ENCODE measurements at regions of chr15 and their contacts with region 1.

Region 1: GRCh38 chr15:58517682-58518525 is 86.1 kb downstream of the LIPC start:
- DNase-seq: peak in 5 of 9 donors; percentile 8 to 34 (median 16)
- ATAC-seq: peak; percentile 44
- H3K4me3 ChIP-seq: no peak overlapping the region
- H3K4me3 Mint-ChIP-seq: peak overlapping the region; percentile 38 to 75 (median 52)
- H3K27ac ChIP-seq: peak overlapping the region; percentile 60
- H3K27ac Mint-ChIP-seq: peak overlapping the region; percentile 41 to 95 (median 88)
- H3K4me1 ChIP-seq: peaks cover 0 to 43% of the 10 kb centered on the region in 2 donors
- H3K4me1 Mint-ChIP-seq: peaks cover 51 to 84% (median 72%) of the 10 kb centered on the region in 7 donors
- H3K27me3 ChIP-seq: no peaks in the 10 kb centered on the region
- H3K27me3 Mint-ChIP-seq: no peaks in the 10 kb centered on the region

Region 2: GRCh38 chr15:58438956-58439355 is 78.9 kb before region 1 on chr15:
- CTCF ChIA-PET with region 1: no interaction called
- POLR2A ChIA-PET with region 1: no interaction called
- intact Hi-C with region 1: loop called in 1 of 2 experiments (anchors 1 kb)
- DNase-seq: peak in 5 of 9 donors; percentile 13 to 46 (median 28)
- ATAC-seq: peak; percentile 62
- H3K4me3 ChIP-seq: no peak overlapping the region
- H3K4me3 Mint-ChIP-seq: no peak overlapping the region
- H3K27ac ChIP-seq: no peak overlapping the region
- H3K27ac Mint-ChIP-seq: peak overlapping the region in 3 of 9 donors; percentile 25 to 70 (median 49)
- H3K4me1 ChIP-seq: no peaks in the 10 kb centered on the region
- H3K4me1 Mint-ChIP-seq: peaks cover 0 to 33% (median 9%) of the 10 kb centered on the region in 7 donors
- H3K27me3 ChIP-seq: no peaks in the 10 kb centered on the region
- H3K27me3 Mint-ChIP-seq: no peaks in the 10 kb centered on the region

Region 3: DNA sequence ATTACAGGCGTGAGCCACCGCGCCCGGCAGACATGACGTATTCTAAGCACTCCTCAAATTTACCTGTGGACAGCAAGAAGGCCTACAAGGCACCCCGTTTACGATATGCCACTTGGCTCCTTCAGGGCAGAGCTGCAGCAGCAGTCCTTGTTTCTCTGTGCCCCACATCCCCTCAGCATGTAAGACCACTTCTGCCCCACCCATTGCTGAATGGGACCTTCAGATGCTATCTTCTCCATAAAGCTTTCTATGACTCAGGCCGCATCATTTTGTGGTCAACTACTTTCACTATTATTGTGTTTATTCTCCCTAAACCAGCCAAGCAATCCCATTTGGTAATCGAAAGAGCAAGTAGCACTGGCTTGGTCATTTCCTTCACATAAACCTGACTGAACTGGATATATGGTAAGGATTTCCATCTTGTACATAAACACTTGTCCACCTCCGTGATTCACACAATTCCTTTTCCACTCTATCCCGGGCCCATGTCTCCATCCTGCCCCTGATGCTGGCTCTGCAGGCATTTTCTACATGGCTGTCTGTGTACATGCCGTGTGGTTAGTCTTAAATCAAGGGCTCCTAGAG is 60.4 kb before region 1 on chr15:
- CTCF ChIA-PET with region 1: no interaction called
- POLR2A ChIA-PET with region 1: no interaction called
- intact Hi-C with region 1: loop called in 1 of 2 experiments (anchors 5 kb)
- DNase-seq: no peak
- ATAC-seq: no peak
- H3K4me3 ChIP-seq: no peak overlapping the region
- H3K4me3 Mint-ChIP-seq: peak overlapping the region in 1 of 10 donors; percentile 47
- H3K27ac ChIP-seq: no peak overlapping the region
- H3K27ac Mint-ChIP-seq: peak overlapping the region in 2 of 9 donors; percentile 16 to 78
- H3K4me1 ChIP-seq: peaks cover 11 to 23% of the 10 kb centered on the region in 2 donors
- H3K4me1 Mint-ChIP-seq: peaks cover 19 to 75% (median 49%) of the 10 kb centered on the region in 7 donors
- H3K27me3 ChIP-seq: no peaks in the 10 kb centered on the region
- H3K27me3 Mint-ChIP-seq: no peaks in the 10 kb centered on the region

Region 4: DNA sequence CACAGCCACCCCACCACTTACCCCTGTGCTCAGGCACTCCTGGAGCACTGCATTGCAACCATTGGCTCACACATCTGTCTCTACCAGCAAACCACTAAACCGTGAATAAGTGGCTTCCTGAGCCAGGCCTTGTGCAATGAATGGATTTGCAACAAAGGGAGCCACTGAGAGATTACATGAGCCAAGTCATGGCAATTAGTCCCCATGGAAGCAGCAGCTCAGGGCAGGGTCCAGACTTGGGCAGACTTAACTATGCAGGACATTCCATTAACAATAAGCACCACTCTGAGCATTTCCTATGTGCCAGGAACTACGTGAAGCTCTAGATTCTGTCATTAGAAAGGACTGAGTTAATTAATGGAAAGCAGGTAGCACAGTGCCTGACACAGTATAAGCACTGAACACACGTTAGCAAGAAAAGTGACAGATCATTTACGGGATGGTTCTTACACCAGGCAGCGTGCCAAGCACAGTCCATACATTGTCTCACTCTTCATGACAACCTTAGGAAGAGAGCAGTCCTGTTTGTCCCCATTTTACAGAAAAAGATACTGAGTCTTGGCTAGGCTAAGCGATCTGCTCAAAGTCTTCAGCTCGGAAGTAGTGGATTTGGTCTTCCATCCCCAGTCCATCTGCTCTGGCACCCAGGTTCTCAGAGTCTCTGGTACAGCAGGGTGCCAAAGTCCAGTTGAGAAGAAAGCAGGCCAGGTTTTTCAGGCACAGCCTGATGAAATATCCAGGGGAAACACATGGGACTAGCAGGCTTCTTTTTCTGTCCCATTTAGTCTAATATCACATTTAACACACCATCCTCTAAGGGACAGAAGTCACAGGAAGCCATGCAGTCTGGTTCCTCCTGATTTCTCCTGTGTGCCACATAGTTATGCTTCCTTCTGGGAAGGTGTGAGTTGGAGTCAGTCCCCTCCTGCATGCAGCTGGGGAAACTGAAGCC is 42.1 kb before region 1 on chr15:
- CTCF ChIA-PET with region 1: no interaction called
- POLR2A ChIA-PET with region 1: no interaction called
- intact Hi-C with region 1: loop called in 1 of 2 experiments (anchors 1 kb)
- DNase-seq: no peak
- ATAC-seq: no peak
- H3K4me3 ChIP-seq: no peak overlapping the region
- H3K4me3 Mint-ChIP-seq: peak overlapping the region in 8 of 10 donors; percentile 15 to 65 (median 42)
- H3K27ac ChIP-seq: peak overlapping the region; percentile 26
- H3K27ac Mint-ChIP-seq: peak overlapping the region; percentile 23 to 89 (median 75)
- H3K4me1 ChIP-seq: peaks cover 28 to 43% of the 10 kb centered on the region in 2 donors
- H3K4me1 Mint-ChIP-seq: peaks cover 33 to 70% (median 57%) of the 10 kb centered on the region in 7 donors
- H3K27me3 ChIP-seq: no peaks in the 10 kb centered on the region
- H3K27me3 Mint-ChIP-seq: no peaks in the 10 kb centered on the region

Region 5: DNA sequence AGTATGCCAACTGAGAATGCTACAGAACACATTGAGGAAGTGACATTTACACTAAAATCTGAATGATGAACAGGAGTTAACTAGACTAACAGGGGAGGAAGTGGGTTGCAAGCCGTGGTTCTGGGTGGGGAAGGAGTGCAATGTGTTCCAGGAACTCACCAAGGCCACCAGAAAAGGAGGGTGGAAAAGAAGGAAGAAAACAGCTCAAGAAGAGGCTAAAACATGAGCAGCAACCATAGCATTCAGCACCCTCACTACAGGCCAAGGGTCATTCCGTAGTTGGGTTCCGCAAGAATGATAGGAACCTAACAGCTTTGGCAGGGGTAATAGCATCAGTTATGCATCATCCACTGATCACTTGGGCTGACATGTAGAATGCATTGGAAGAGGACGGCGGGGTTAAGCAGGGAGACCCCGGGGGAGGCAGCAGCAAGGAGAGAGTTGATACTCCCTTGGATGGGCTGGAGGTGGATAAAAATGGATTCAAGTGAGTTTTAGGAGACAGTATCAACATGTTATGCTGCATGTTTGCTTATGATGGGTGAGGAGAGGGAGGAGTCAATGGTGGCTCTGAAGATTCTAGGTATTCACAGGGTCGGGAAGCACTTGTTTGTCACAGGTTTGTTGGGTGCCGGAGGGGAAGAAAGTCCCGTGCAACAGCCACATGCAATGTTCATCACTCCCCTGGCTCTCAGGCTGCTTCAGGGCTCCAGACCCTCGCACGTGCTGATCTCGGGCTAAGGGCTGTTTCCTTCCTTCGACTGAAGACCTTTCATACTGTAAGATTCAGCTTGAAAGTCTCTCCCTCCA is 32.9 kb before region 1 on chr15:
- CTCF ChIA-PET with region 1: no interaction called
- POLR2A ChIA-PET with region 1: interaction called, 3 read pairs
- intact Hi-C with region 1: loop called (anchors 2 kb)
- DNase-seq: peak in 6 of 9 donors; percentile 56 to 73 (median 65)
- ATAC-seq: peak; percentile 85
- H3K4me3 ChIP-seq: peak overlapping the region; percentile 25
- H3K4me3 Mint-ChIP-seq: peak overlapping the region; percentile 61 to 81 (median 72)
- H3K27ac ChIP-seq: peak overlapping the region; percentile 42
- H3K27ac Mint-ChIP-seq: peak overlapping the region; percentile 80 to 95 (median 90)
- H3K4me1 ChIP-seq: peaks cover 42 to 45% of the 10 kb centered on the region in 2 donors
- H3K4me1 Mint-ChIP-seq: peaks cover 36 to 52% (median 48%) of the 10 kb centered on the region in 7 donors
- H3K27me3 ChIP-seq: no peaks in the 10 kb centered on the region
- H3K27me3 Mint-ChIP-seq: no peaks in the 10 kb centered on the region

Region 6: DNA sequence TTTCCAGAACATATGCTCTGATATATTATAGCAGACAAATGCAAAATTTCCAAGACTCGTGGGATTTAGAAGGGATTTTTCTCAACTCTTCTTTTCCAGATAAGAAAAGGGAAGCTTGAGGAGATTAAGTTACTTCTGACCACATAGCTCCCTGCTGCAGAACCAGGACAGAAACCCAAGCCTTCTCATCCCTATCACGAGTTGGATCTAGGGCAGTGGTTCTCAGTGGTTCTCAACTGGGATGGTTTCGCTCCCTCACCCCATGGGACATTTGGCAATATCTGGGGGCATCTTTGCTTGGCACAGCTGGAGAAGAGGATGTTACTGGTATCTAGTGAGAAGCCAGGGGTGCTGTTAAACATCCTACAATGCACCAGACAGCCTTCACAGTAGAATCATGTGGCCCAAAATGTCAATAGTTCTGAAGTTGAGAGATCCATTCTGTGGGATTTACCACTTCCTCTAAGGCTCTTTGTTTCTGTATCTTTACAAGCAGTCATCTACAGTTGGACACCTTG is 22.0 kb before region 1 on chr15:
- CTCF ChIA-PET with region 1: no interaction called
- POLR2A ChIA-PET with region 1: no interaction called
- intact Hi-C with region 1: no loop called
- DNase-seq: peak in 6 of 9 donors; percentile 34 to 68 (median 44)
- ATAC-seq: peak; percentile 46
- H3K4me3 ChIP-seq: no peak overlapping the region
- H3K4me3 Mint-ChIP-seq: peak overlapping the region; percentile 11 to 53 (median 35)
- H3K27ac ChIP-seq: no peak overlapping the region
- H3K27ac Mint-ChIP-seq: peak overlapping the region in 6 of 9 donors; percentile 4 to 60 (median 41)
- H3K4me1 ChIP-seq: peaks cover 4 to 11% of the 10 kb centered on the region in 2 donors
- H3K4me1 Mint-ChIP-seq: peaks cover 22 to 46% (median 41%) of the 10 kb centered on the region in 7 donors
- H3K27me3 ChIP-seq: no peaks in the 10 kb centered on the region
- H3K27me3 Mint-ChIP-seq: no peaks in the 10 kb centered on the region

Region 7: DNA sequence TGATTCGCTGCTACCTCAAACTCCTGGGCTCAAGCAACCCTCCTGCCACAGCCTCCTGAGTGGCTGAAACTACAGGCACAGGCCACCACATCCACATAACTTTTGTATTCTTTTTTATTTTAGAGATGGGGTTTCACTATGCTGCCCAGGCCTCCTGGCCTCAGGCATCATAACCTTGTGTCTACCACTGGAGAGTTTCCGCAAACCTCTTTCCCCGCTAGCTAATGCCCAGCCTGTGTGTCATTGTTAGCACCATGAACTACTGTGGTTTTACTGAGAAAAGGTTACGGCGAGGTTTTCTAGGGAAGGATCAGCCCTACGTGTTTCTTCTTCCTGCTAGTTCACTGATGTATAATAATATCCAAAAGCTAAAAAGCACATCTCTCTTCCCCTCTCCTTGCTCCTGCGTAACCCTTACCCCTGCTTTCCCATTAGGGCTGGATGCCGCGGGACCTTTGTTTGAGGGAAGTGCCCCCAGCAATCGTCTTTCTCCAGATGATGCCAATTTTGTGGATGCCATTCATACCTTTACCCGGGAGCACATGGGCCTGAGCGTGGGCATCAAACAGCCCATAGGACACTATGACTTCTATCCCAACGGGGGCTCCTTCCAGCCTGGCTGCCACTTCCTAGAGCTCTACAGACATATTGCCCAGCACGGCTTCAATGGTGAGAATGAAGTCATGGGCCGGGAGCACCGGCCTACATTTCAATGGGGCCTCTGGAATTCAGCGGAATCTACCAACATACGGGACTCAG is 27.6 kb after region 1 on chr15:
- CTCF ChIA-PET with region 1: no interaction called
- POLR2A ChIA-PET with region 1: no interaction called
- intact Hi-C with region 1: loop called in 1 of 2 experiments (anchors 1 kb)
- DNase-seq: peak in 1 of 9 donors; percentile 47
- ATAC-seq: no peak
- H3K4me3 ChIP-seq: no peak overlapping the region
- H3K4me3 Mint-ChIP-seq: peak overlapping the region in 7 of 10 donors; percentile 2 to 64 (median 23)
- H3K27ac ChIP-seq: no peak overlapping the region
- H3K27ac Mint-ChIP-seq: peak overlapping the region in 8 of 9 donors; percentile 34 to 98 (median 52)
- H3K4me1 ChIP-seq: peaks cover 0 to 12% of the 10 kb centered on the region in 2 donors
- H3K4me1 Mint-ChIP-seq: peaks cover 14 to 65% (median 19%) of the 10 kb centered on the region in 7 donors
- H3K27me3 ChIP-seq: no peaks in the 10 kb centered on the region
- H3K27me3 Mint-ChIP-seq: no peaks in the 10 kb centered on the region

Region 8: DNA sequence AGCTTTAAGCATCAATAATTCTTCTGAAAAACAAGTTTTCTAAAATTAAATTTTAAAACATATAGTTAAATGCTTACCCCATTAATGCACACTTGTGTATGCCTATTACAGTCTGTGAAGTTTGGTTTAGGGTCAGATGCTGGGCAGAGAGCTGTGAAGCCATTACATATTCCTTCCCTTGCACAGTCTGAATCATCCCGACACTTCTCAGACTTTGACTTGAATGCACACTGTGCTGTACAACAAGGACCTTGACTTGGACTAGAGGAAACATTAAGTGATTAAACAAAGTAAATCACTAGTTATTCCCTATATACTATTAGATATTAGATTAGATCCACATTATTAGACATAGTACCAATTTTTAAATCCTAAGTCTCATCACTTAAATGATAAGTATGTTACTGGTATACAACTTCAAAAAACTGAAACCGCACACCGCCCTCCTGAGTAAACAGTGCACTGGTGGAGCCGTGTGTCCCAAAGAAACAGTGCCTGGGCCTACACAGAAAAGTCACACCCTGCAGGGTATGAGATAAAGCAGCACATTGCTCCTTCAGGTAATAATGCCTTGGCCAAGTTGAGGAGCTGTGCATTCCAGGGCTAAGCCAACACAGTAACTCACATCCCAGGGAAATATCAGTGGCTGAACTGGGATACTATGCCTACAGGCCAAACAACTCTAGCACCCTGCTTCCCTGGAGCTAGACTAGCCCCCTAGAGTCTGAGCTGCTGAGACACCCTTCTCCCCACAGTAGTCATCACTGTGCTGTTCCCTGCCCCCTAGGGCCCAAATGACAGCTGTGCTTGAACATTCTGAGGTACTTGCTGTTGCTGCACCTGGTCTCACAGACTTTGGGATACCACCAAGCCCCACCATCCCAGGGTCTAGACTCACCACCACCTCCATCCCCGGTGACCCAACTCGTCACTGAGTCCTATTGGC is 94.1 kb after region 1 on chr15:
- CTCF ChIA-PET with region 1: no interaction called
- POLR2A ChIA-PET with region 1: no interaction called
- intact Hi-C with region 1: no loop called
- DNase-seq: no peak
- ATAC-seq: no peak
- H3K4me3 ChIP-seq: no peak overlapping the region
- H3K4me3 Mint-ChIP-seq: no peak overlapping the region
- H3K27ac ChIP-seq: no peak overlapping the region
- H3K27ac Mint-ChIP-seq: peak overlapping the region in 1 of 9 donors; percentile 53
- H3K4me1 ChIP-seq: no peaks in the 10 kb centered on the region
- H3K4me1 Mint-ChIP-seq: peaks cover 9 to 67% (median 29%) of the 10 kb centered on the region in 7 donors
- H3K27me3 ChIP-seq: no peaks in the 10 kb centered on the region
- H3K27me3 Mint-ChIP-seq: no peaks in the 10 kb centered on the region

Region 9: GRCh38 chr15:58924327-58924726 is 406.4 kb after region 1 on chr15:
- CTCF ChIA-PET with region 1: no interaction called
- POLR2A ChIA-PET with region 1: no interaction called
- intact Hi-C with region 1: no loop called
- DNase-seq: no peak
- ATAC-seq: no peak
- H3K4me3 ChIP-seq: no peak overlapping the region
- H3K4me3 Mint-ChIP-seq: no peak overlapping the region
- H3K27ac ChIP-seq: no peak overlapping the region
- H3K27ac Mint-ChIP-seq: peak overlapping the region in 1 of 9 donors; percentile 82
- H3K4me1 ChIP-seq: peaks cover 10 to 14% of the 10 kb centered on the region in 2 donors
- H3K4me1 Mint-ChIP-seq: peaks cover 9 to 52% (median 31%) of the 10 kb centered on the region in 7 donors
- H3K27me3 ChIP-seq: no peaks in the 10 kb centered on the region
- H3K27me3 Mint-ChIP-seq: no peaks in the 10 kb centered on the region

Measured in naive thymus-derived CD4-positive, alpha-beta T cell (primary cell).